CD4-positive, alpha-beta memory T cell (primary cell): ENCODE measurements at regions of chr1 and their contacts with region 1.

Region 1: DNA sequence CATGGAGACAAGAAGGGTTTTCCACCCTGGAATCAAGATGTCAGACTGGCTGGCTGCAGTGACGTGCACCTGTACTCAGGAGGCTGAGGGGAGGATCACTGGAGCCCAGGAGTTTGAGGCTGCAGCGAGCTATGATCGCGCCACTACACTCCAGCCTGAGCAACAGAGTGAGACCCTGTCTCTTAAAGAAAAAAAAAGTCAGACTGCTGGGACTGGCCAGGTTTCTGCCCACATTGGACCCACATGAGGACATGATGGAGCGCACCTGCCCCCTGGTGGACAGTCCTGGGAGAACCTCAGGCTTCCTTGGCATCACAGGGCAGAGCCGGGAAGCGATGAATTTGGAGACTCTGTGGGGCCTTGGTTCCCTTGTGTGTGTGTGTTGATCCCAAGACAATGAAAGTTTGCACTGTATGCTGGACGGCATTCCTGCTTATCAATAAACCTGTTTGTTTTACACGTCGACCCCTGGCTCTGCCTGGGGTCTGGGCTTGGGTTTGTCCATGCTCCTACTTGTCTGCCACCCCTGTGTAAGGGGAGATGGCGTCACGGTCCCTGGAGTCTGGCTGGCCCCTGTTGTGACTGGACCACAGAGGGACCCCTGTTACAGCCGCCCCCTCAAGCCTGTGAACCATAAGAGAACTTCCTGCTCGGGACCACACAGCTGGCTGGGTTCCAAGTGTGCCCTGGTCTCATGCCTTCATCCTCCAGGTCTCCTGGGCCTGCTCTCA is 20.9 kb upstream of the VPS13D start:
- DNase-seq: peak; percentile 72 to 85 (median 79)
- H3K4me3 ChIP-seq: no peak overlapping the region
- H3K4me3 Mint-ChIP-seq: peak overlapping the region in 7 of 8 donors; percentile 26 to 82 (median 47)
- H3K27ac ChIP-seq: peak overlapping the region; percentile 36
- H3K27ac Mint-ChIP-seq: peak overlapping the region; percentile 78 to 93 (median 88)
- H3K4me1 ChIP-seq: peaks cover 57% of the 10 kb centered on the region
- H3K4me1 Mint-ChIP-seq: peaks cover 39 to 71% (median 48%) of the 10 kb centered on the region in 4 donors
- H3K27me3 ChIP-seq: no peaks in the 10 kb centered on the region
- H3K27me3 Mint-ChIP-seq: no peaks in the 10 kb centered on the region

Region 2: GRCh38 chr1:12153181-12153785 is 55.6 kb before region 1 on chr1:
- CTCF ChIA-PET with region 1: interaction called, 15 read pairs
- POLR2A ChIA-PET with region 1: interaction called, 40 read pairs
- intact Hi-C with region 1: no loop called
- DNase-seq: peak in 1 of 5 donors; percentile 73
- H3K4me3 ChIP-seq: peak overlapping the region in 1 of 2 donors; percentile 17
- H3K4me3 Mint-ChIP-seq: peak overlapping the region in 7 of 8 donors; percentile 30 to 78 (median 63)
- H3K27ac ChIP-seq: peak overlapping the region; percentile 51
- H3K27ac Mint-ChIP-seq: peak overlapping the region; percentile 92 to 99 (median 97)
- H3K4me1 ChIP-seq: peaks cover 96% of the 10 kb centered on the region
- H3K4me1 Mint-ChIP-seq: peaks cover 71 to 92% (median 84%) of the 10 kb centered on the region in 4 donors
- H3K27me3 ChIP-seq: no peaks in the 10 kb centered on the region
- H3K27me3 Mint-ChIP-seq: no peaks in the 10 kb centered on the region

Region 3: DNA sequence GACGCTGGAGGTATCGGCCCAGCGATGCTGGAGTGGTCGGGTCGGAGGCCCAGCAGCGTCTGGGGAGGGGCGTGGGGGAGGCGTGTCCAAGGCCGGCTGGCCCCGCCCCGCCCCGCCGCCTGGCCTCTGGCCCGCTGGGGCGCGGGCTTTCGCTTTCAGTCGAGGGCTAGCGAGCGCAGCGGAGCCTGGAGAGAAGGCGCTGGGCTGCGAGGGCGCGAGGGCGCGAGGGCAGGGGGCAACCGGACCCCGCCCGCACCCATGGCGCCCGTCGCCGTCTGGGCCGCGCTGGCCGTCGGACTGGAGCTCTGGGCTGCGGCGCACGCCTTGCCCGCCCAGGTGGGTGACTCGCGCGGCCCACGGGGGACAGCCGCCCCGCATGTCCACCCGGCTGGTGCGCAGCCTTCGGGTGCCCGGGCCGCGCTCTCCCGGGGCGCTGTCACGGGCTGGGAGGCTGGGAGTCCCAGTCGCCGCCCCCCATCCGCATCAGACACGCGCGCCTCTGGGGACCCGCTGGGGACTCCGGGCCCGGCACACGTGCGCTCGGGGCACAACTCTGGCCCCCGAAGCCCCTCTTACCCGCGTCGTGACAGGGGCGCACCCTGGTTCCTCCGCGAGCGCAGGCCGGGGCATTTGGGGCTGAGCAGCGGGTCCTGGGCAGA is 42.0 kb before region 1 on chr1 and contains the start of gene TNFRSF1B:
- CTCF ChIA-PET with region 1: interaction called, 10 read pairs
- POLR2A ChIA-PET with region 1: interaction called, 33 read pairs
- intact Hi-C with region 1: no loop called
- DNase-seq: peak; percentile 57 to 75 (median 63)
- H3K4me3 ChIP-seq: peak within 1 kb of the TSS; percentile 85 to 93
- H3K4me3 Mint-ChIP-seq: peak within 1 kb of the TSS; percentile 100
- H3K27ac ChIP-seq: peak within 1 kb of the TSS; percentile 88
- H3K27ac Mint-ChIP-seq: peak within 1 kb of the TSS; percentile 99 to 100 (median 99)
- H3K4me1 ChIP-seq: peaks cover 85% of the 10 kb centered on the region
- H3K4me1 Mint-ChIP-seq: peaks cover 43 to 81% (median 65%) of the 10 kb centered on the region in 4 donors
- H3K27me3 ChIP-seq: no peaks in the 10 kb centered on the region
- H3K27me3 Mint-ChIP-seq: no peaks in the 10 kb centered on the region
- total RNA-seq, gene TNFRSF1B: 111 TPM

Region 4: GRCh38 chr1:12184008-12184681 is 24.8 kb before region 1 on chr1:
- CTCF ChIA-PET with region 1: interaction called, 44 read pairs
- POLR2A ChIA-PET with region 1: interaction called, 48 read pairs
- intact Hi-C with region 1: loop called (anchors 2 kb)
- DNase-seq: no peak
- H3K4me3 ChIP-seq: no peak overlapping the region
- H3K4me3 Mint-ChIP-seq: peak overlapping the region in 1 of 8 donors; percentile 64
- H3K27ac ChIP-seq: peak overlapping the region; percentile 51
- H3K27ac Mint-ChIP-seq: peak overlapping the region; percentile 67 to 99 (median 91)
- H3K4me1 ChIP-seq: peaks cover 96% of the 10 kb centered on the region
- H3K4me1 Mint-ChIP-seq: peaks cover 38 to 98% (median 69%) of the 10 kb centered on the region in 4 donors
- H3K27me3 ChIP-seq: no peaks in the 10 kb centered on the region
- H3K27me3 Mint-ChIP-seq: no peaks in the 10 kb centered on the region